Heart right ventricle (tissue), 16 donors: ENCODE measurements at regions of chr14 and their contacts with region 1.

Region 1: GRCh38 chr14:80850197-80850814 is 91.2 kb downstream of the CEP128 start:
- DNase-seq: no peak
- ATAC-seq: no peak
- H3K4me3 ChIP-seq: no peak overlapping the region
- H3K27ac ChIP-seq: no peak overlapping the region
- H3K4me1 ChIP-seq: peaks cover 0 to 4% (median 0%) of the 10 kb centered on the region in 9 donors
- H3K27me3 ChIP-seq: no peaks in the 10 kb centered on the region
- CTCF ChIP-seq: peak; percentile 29 to 74 (median 62)

Region 2: DNA sequence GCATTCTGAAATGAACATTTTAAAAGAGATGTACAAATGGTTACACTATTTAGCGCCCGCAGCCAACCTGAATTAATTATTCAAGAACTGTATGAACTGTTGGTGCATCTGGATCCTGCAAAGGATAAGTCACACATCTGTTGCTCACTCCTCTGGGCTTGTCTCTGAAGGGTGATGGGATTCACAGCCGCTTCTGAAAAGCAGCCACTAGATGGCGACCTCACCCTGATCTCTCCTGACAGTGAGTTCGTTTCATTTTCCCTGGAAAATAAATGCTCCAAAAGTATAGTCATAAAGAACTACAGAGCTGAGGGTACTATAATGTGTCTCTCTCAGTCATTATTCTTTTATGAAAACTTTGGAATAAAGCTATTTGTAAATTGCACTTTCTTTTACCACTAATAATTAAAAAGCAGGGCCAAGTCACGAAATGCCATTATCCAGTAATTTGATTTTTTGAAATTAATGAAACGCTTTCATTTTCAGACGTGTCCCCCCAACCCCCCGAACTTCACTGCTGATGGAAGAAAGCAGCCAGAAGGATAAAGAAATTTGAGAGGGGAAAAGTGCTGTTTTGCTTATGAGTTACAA is 1890.5 kb before region 1 on chr14:
- intact Hi-C with region 1: loop called in 3 of 10 experiments (anchors 10 kb)
- DNase-seq: peak; percentile 45 to 62
- ATAC-seq: peak in 6 of 8 donors; percentile 52 to 69 (median 58)
- H3K4me3 ChIP-seq: peak overlapping the region in 5 of 10 donors; percentile 25 to 40 (median 26)
- H3K27ac ChIP-seq: no peak overlapping the region
- H3K4me1 ChIP-seq: peaks cover 0 to 5% (median 0%) of the 10 kb centered on the region in 9 donors
- H3K27me3 ChIP-seq: peaks cover 0 to 6% (median 0%) of the 10 kb centered on the region in 7 donors
- CTCF ChIP-seq: peak; percentile 63 to 94 (median 87)

Region 3: DNA sequence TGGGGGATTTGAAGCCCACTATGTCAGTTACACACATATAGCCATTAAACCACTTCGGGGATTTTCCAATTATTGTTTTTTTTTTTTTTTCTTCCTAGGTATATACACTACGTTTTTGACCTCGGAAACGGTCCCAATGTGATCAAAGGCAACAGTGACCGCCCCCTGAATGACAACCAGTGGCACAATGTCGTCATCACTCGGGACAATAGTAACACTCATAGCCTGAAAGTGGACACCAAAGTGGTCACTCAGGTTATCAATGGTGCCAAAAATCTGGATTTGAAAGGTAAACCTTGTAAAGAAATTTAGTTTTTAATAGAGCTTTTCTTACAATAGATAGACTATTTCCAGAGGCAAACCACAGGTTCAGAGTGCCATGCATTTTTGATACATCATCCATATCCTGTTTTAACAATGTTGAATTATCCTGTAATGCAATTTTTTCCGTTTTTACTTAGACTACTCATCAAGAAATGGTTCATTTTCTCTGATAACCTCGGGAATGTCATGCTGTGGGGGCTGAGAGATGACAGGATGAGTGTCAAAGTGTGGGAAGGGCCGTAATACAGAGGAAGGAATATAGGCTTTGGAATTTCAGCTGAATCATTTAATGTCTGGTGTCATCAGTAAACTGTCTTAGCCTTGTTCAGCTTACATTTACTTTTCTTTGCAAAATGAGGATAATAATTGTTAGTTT is 1883.0 kb before region 1 on chr14:
- intact Hi-C with region 1: loop called in 6 of 10 experiments (anchors 5 to 10 kb)
- DNase-seq: no peak
- ATAC-seq: no peak
- H3K4me3 ChIP-seq: no peak overlapping the region
- H3K27ac ChIP-seq: no peak overlapping the region
- H3K4me1 ChIP-seq: no peaks in the 10 kb centered on the region
- H3K27me3 ChIP-seq: peaks cover 0 to 6% (median 0%) of the 10 kb centered on the region in 7 donors
- CTCF ChIP-seq: no peak

Region 4: GRCh38 chr14:78974691-78975090 is 1875.6 kb before region 1 on chr14:
- intact Hi-C with region 1: loop called in 6 of 10 experiments (anchors 5 to 10 kb)
- DNase-seq: no peak
- ATAC-seq: no peak
- H3K4me3 ChIP-seq: no peak overlapping the region
- H3K27ac ChIP-seq: no peak overlapping the region
- H3K4me1 ChIP-seq: no peaks in the 10 kb centered on the region
- H3K27me3 ChIP-seq: no peaks in the 10 kb centered on the region
- CTCF ChIP-seq: no peak

Region 5: DNA sequence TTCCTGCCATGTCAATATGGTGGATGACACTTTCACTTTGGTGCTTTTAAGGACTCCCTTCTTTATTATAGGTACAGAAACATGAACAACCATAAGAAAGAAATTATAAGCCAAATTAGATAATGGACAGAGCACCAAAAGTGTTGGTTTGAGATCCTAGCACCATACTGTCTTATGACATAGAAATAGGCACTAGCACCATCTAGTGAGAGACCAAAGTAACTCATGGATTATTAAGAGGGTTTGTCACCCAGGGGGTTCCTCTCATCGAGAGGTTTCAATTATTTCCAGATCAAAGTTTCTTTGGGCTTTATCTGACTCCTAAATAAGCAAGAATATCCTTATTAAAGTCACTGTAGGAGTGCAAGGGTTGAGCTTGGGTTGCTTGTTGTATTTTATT is 486.0 kb before region 1 on chr14:
- intact Hi-C with region 1: no loop called
- DNase-seq: no peak
- ATAC-seq: no peak
- H3K4me3 ChIP-seq: no peak overlapping the region
- H3K27ac ChIP-seq: no peak overlapping the region
- H3K4me1 ChIP-seq: no peaks in the 10 kb centered on the region
- H3K27me3 ChIP-seq: no peaks in the 10 kb centered on the region
- CTCF ChIP-seq: peak in 4 of 9 donors; percentile 18 to 38 (median 23)

Region 6: DNA sequence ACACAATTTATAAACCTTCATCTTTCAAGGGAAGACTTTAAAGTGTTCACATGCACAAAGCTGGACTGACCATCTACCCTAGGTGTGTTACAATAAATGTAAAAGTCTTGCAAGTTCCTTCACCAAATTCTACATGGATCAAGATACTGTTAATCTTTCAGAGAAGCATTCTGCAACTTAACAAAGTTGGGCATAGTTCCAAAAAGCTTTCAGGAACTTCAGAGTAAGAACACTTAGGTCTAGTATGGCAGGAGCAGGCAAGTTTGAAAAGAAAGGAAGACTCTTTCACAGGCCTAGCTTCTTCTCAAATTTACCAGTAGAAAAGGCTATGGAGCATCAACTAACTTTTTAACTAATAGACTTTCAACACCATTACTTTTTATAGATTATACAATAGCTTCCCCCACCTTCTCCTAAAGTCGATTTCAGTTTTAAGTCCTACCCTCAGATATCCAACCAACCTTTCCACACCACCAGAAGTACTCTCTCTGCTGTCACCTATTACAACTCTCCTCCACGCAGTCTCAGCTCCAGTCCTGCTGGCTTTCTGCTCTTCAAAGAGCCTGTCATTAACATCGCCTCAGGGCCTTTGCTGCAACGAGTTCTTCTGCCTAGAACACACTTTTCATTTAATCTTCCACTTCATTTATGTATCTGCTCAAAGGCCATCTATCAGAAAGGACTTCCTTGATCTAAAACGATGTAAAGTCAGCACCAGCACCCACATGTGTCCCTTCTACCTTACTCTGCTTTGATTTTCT is 242.7 kb before region 1 on chr14:
- intact Hi-C with region 1: loop called in 1 of 10 experiments (anchors 10 kb)
- DNase-seq: no peak
- ATAC-seq: no peak
- H3K4me3 ChIP-seq: no peak overlapping the region
- H3K27ac ChIP-seq: peak overlapping the region in 1 of 10 donors; percentile 26
- H3K4me1 ChIP-seq: peaks cover 0 to 10% (median 0%) of the 10 kb centered on the region in 9 donors
- H3K27me3 ChIP-seq: no peaks in the 10 kb centered on the region
- CTCF ChIP-seq: no peak

Region 7: DNA sequence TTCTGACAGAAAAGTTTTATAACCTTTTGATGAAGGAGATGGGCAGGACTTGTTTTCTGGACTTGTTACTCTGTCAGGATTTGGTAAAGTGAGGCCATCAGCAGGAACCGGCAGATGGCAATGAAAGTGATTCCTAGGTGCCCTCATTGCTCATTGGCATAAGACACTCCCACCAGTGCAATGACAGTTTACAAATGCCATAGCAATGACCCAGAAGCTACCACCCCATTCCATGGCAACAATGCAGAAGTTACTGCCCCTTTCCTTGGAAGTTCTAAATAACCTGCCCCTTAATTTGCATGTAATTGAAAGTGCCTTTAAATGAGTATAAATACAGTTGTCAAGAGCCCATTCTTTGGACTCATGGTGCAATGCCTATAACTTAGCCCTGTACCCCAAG is 131.4 kb before region 1 on chr14:
- intact Hi-C with region 1: no loop called
- DNase-seq: no peak
- ATAC-seq: no peak
- H3K4me3 ChIP-seq: no peak overlapping the region
- H3K27ac ChIP-seq: no peak overlapping the region
- H3K4me1 ChIP-seq: no peaks in the 10 kb centered on the region
- H3K27me3 ChIP-seq: no peaks in the 10 kb centered on the region
- CTCF ChIP-seq: no peak